ENCODE measurements at regions of chr4 and their contacts with region 1.

Region 1: GRCh38 chr4:84503495-84504437 is 4.7 kb upstream of the NKX6-1 start:
- DNase-seq: peak; percentile 65 to 81
- H3K4me3 ChIP-seq: no peak overlapping the region
- H3K4me1 ChIP-seq: peaks cover 8% of the 10 kb centered on the region; the same call in 1 of the 2 replicates
- H3K27me3 ChIP-seq: no peaks in the 10 kb centered on the region

Region 2: DNA sequence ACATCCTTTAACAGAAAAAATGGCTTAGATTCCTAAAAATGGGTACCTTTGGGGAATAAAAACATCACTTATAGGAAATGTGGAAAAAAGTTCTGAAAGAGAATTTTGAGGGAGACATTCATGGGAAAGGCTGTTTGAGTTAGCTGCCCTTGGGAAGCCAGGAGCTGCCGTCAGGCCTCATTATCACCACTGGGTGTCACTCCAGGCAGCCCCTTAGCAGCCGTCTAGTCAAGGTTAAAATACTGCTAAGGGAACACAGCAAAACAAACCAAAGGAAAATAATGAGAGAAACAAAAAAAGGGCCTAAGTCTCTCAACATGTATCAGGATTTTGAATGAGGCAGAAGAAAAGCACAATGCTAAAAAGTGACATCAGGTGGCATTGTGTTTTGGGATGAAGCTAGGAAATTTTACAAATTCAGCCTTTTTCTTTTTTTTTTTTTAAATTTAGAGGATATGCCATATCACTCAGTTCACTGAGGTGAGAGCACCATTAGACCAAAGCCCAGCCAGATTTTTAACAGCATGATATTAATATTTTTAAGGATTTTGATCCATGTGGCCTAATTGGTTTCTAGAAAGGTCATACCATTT is 732.6 kb before region 1 on chr4:
- in situ Hi-C with region 1: loop called (anchors 25 kb)
- DNase-seq: peak; percentile 69 to 75
- H3K4me3 ChIP-seq: no peak overlapping the region
- H3K4me1 ChIP-seq: no peaks in the 10 kb centered on the region; the same call in 1 of the 2 replicates
- H3K27me3 ChIP-seq: no peaks in the 10 kb centered on the region

Region 3: GRCh38 chr4:83917572-83917971 is 586.2 kb before region 1 on chr4:
- in situ Hi-C with region 1: loop called (anchors 10 kb)
- DNase-seq: no peak
- H3K4me3 ChIP-seq: no peak overlapping the region
- H3K4me1 ChIP-seq: peaks cover 29% of the 10 kb centered on the region
- H3K27me3 ChIP-seq: no peaks in the 10 kb centered on the region

Region 4: DNA sequence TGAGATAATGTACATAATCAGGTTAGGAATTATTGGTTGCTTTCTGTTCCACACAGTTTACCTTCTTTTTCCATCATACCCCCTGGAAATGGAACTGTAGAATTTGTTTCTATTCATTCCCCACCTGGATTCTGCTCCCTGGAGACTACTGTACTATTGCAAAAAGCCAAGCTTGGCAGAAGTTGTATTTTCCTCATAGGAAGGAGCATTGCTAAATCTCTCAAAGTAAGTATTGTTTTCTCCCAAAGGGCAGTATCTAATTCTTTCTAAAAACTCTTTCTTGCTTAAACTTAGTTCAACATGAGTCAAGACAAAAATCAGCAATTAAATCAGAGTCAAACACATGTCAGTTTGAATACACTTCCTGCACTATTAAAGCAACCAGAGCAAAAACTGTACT is 215.3 kb after region 1 on chr4:
- in situ Hi-C with region 1: no loop called
- DNase-seq: no peak
- H3K4me3 ChIP-seq: no peak overlapping the region
- H3K4me1 ChIP-seq: no peaks in the 10 kb centered on the region
- H3K27me3 ChIP-seq: no peaks in the 10 kb centered on the region

Region 5: DNA sequence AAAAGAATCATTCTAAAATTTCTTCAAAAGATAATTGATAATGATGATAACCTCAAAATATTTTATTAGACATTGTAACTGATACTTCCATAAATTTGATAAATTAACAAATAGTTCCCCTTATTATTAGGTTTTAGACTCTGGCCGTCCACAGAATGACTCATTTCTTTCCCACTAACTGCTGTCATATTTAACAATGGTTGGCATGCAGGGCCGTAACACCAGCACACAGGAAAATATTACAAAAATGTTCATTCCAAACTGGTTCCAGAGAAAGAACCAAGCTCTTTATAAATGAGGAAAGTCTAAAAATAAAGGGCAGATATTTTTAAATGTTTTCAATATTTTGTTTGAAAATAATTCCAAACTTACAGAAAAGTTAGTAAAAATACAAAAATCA is 434.6 kb after region 1 on chr4:
- in situ Hi-C with region 1: no loop called
- DNase-seq: no peak
- H3K4me3 ChIP-seq: no peak overlapping the region
- H3K4me1 ChIP-seq: peaks cover 8% of the 10 kb centered on the region
- H3K27me3 ChIP-seq: no peaks in the 10 kb centered on the region

Measured in HAP-1 (cell line).